IMR-90 (cell line): ENCODE measurements at regions of chr6 and their contacts with region 1.

Region 1: GRCh38 chr6:38034274-38034914 is 214.9 kb downstream of the ZFAND3 start:
- DNase-seq: peak; percentile 79
- ATAC-seq: peak; percentile 71
- H3K4me3 ChIP-seq: no peak overlapping the region
- H3K27ac ChIP-seq: no peak overlapping the region
- H3K4me1 ChIP-seq: peaks cover 6% of the 10 kb centered on the region
- H3K27me3 ChIP-seq: no peaks in the 10 kb centered on the region
- CTCF ChIP-seq: peak; percentile 66
- POLR2A ChIP-seq: no peak
- RAD21 ChIP-seq: peak; percentile 61

Region 2: DNA sequence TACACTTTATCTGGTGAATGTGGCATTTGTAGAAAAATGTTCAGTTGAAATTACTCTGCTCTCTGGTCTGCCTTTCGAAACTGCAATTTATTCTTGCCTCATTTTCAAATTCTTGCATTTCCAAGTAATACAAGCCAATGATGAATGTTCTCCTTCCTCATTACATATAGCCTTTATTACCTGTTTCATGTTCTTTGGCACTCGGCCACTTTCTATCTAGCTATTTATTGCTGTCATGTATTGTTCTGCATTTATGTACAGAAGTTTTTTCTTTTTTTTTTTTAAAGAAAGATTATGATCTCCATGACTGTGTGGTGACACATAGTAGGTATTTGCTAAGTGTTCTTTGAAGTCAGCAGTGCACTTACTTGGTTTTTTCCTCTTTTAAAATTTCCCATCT is 46.5 kb after region 1 on chr6:
- CTCF ChIA-PET with region 1: no interaction called
- POLR2A ChIA-PET with region 1: no interaction called
- dilution Hi-C with region 1: no loop called
- in situ Hi-C with region 1: no loop called
- intact Hi-C with region 1: no loop called
- DNase-seq: no peak
- ATAC-seq: peak; percentile 30; the same call in 1 of the 2 replicates
- H3K4me3 ChIP-seq: no peak overlapping the region
- H3K27ac ChIP-seq: peak overlapping the region; percentile 8; the same call in 1 of the 2 replicates
- H3K4me1 ChIP-seq: peaks cover 5% of the 10 kb centered on the region
- H3K27me3 ChIP-seq: no peaks in the 10 kb centered on the region
- CTCF ChIP-seq: no peak
- POLR2A ChIP-seq: no peak
- RAD21 ChIP-seq: no peak

Region 3: DNA sequence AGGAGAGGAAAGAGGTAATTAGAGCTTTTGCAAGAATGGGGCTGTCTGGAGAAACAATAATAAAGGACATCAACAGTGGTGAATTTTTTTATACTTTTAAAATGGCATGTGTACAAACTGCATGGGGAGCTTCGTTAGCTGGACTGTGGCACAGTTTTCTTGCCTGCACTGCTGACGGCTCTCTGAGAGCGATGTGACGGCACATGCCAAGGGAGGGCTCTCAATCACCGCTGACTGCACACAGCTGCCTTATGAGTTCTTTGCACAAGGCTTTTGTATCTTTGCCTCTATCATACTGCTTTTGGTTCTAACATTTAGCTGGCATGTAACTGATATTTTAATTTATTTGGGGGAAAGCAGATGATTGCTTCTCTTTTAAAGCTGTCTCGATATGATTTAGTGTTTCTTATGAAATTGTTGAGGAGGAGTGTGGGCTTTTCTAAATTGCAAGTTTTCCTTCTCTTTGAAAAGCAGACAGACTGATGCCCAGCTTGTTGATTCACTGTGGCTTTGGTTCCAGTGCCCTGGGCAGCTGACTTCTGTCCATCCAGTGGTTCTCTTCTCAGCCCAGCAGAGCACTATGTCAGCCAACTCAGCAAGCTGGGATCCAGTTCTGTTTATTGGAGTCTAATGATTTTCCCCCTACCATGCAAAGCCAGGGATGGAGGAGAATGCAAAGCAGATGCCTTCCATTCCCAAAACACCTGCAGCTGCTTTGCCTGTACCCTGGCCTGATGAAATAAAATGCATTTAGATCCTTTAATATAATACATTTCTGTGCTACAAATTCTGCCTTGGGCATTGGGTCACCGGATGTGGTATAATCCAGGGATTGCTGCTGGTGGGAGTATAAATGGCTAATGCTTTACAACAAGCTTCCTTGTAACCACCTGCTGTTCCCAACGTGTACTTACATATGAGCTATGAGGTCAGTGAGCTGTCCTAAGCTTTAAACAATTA is 109.1 kb after region 1 on chr6:
- CTCF ChIA-PET with region 1: no interaction called
- POLR2A ChIA-PET with region 1: no interaction called
- dilution Hi-C with region 1: no loop called
- in situ Hi-C with region 1: no loop called
- intact Hi-C with region 1: loop called (anchors 10 kb)
- DNase-seq: no peak
- ATAC-seq: no peak
- H3K4me3 ChIP-seq: no peak overlapping the region
- H3K27ac ChIP-seq: no peak overlapping the region
- H3K4me1 ChIP-seq: peaks cover 7% of the 10 kb centered on the region; the same call in 1 of the 2 replicates
- H3K27me3 ChIP-seq: no peaks in the 10 kb centered on the region
- CTCF ChIP-seq: no peak
- POLR2A ChIP-seq: no peak
- RAD21 ChIP-seq: no peak

Region 4: DNA sequence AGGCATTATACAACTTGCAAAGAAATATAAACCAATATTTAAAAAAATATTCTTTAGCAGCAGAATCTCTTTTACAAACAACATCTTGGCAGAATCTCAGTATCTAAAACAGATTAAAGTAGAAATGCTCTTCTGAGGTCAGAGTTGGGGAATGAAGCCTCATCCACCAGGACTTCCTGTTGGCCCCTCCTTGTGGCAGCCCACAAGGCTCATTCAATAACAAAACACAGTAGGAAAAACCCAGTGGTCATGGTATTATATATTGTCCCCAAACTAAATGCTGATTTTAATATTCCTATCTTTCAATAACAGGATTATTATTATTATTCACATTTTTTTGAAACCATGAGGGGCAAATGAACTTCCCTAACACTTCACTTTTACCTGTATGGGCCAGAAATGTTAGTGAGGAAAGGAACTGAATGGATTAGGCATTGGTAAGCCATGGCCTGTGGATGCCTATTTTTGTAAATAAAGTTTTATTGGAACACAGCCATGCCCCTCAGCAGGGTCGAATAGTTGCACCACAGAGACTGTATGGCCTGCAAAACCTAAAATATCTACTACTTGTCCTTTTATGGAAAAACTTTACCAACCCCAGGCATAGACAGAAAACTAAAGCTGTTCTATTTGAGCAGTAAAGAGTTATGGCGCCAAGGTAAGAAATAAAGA is 236.8 kb after region 1 on chr6:
- CTCF ChIA-PET with region 1: no interaction called
- POLR2A ChIA-PET with region 1: no interaction called
- dilution Hi-C with region 1: no loop called
- in situ Hi-C with region 1: no loop called
- intact Hi-C with region 1: loop called (anchors 5 kb)
- DNase-seq: peak; percentile 57
- ATAC-seq: peak; percentile 65; the same call in 1 of the 2 replicates
- H3K4me3 ChIP-seq: no peak overlapping the region
- H3K27ac ChIP-seq: no peak overlapping the region
- H3K4me1 ChIP-seq: peaks cover 24% of the 10 kb centered on the region
- H3K27me3 ChIP-seq: no peaks in the 10 kb centered on the region
- CTCF ChIP-seq: no peak
- POLR2A ChIP-seq: no peak
- RAD21 ChIP-seq: no peak

Region 5: GRCh38 chr6:38671885-38672467 is 637.6 kb after region 1 on chr6:
- CTCF ChIA-PET with region 1: no interaction called
- POLR2A ChIA-PET with region 1: no interaction called
- dilution Hi-C with region 1: no loop called
- in situ Hi-C with region 1: no loop called
- intact Hi-C with region 1: loop called (anchors 5 kb)
- DNase-seq: peak; percentile 76
- ATAC-seq: peak; percentile 91
- H3K4me3 ChIP-seq: no peak overlapping the region
- H3K27ac ChIP-seq: no peak overlapping the region
- H3K4me1 ChIP-seq: no peaks in the 10 kb centered on the region
- H3K27me3 ChIP-seq: no peaks in the 10 kb centered on the region
- CTCF ChIP-seq: peak; percentile 80
- POLR2A ChIP-seq: no peak
- RAD21 ChIP-seq: peak; percentile 78